ENCODE measurements at regions of chr10 and their contacts with region 1.

Region 1: GRCh38 chr10:127354992-127355391 is 158.6 kb upstream of the INSYN2A start:
- DNase-seq: peak; percentile 27
- H3K4me3 ChIP-seq: no peak overlapping the region
- H3K27ac ChIP-seq: no peak overlapping the region
- H3K4me1 ChIP-seq: no peaks in the 10 kb centered on the region
- H3K27me3 ChIP-seq: no peaks in the 10 kb centered on the region
- CTCF ChIP-seq: peak; percentile 30
- POLR2A ChIP-seq: no peak

Region 2: DNA sequence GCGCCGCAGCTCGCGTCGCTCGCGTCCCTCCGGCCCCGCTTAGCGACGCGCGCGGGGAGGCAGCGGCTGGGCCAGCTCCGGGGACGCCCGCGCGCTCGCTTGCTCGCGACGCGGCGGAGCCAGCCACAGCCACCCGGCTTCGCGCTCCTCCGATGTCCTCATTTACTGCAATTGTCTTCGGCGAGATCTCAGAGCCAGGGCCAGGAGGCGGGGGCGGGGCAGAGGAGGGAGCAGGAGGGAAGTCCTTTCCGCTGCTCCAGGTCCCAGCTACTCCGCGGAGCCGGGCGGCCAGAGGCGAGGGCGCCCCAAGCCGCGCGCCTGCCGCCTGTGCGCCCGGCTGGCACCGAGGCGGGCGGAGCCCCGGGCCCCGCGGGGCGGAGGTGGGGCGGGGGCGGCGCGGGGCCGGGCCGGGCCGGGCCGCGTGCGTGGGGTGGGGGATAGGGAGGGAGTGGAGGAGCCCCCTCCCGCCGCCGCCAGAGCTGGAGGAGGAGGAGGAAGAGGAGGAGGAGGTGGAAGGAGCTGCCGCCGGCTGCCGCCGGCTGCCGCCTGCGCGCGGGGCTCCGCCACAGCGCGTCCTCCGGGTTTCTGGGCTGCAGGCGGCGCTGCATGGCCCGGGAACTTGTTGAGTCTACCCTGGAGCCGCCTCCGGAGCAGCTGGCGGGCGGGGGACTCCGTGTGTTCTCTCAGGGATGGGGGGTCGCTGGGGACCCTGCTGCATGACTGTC is 158.6 kb before region 1 on chr10 and contains the start of gene INSYN2A:
- CTCF ChIA-PET with region 1: no interaction called
- POLR2A ChIA-PET with region 1: no interaction called
- dilution Hi-C with region 1: no loop called
- intact Hi-C with region 1: loop called (anchors 5 kb)
- DNase-seq: peak; percentile 37
- H3K4me3 ChIP-seq: peak within 1 kb of the TSS; percentile 30 to 41 (median 39)
- H3K27ac ChIP-seq: no peak within 1 kb of the TSS
- H3K4me1 ChIP-seq: peaks cover 4% of the 10 kb centered on the region
- H3K27me3 ChIP-seq: peaks cover 5 to 19% of the 10 kb centered on the region in 2 experiments
- CTCF ChIP-seq: peak; percentile 13 to 27
- POLR2A ChIP-seq: no peak
- total RNA-seq, gene INSYN2A: 0.07 TPM in 1 of 2 replicates, not detected in the other

Region 3: GRCh38 chr10:127243490-127244272 is 111.3 kb before region 1 on chr10:
- CTCF ChIA-PET with region 1: interaction called, 6 read pairs
- POLR2A ChIA-PET with region 1: no interaction called
- dilution Hi-C with region 1: no loop called
- intact Hi-C with region 1: loop called (anchors 1 kb)
- DNase-seq: peak; percentile 58
- H3K4me3 ChIP-seq: no peak overlapping the region
- H3K27ac ChIP-seq: no peak overlapping the region
- H3K4me1 ChIP-seq: no peaks in the 10 kb centered on the region
- H3K27me3 ChIP-seq: no peaks in the 10 kb centered on the region
- CTCF ChIP-seq: peak; percentile 67 to 77
- POLR2A ChIP-seq: no peak